A549 (cell line): ENCODE measurements at regions of chr20 and their contacts with region 1.

Region 1: DNA sequence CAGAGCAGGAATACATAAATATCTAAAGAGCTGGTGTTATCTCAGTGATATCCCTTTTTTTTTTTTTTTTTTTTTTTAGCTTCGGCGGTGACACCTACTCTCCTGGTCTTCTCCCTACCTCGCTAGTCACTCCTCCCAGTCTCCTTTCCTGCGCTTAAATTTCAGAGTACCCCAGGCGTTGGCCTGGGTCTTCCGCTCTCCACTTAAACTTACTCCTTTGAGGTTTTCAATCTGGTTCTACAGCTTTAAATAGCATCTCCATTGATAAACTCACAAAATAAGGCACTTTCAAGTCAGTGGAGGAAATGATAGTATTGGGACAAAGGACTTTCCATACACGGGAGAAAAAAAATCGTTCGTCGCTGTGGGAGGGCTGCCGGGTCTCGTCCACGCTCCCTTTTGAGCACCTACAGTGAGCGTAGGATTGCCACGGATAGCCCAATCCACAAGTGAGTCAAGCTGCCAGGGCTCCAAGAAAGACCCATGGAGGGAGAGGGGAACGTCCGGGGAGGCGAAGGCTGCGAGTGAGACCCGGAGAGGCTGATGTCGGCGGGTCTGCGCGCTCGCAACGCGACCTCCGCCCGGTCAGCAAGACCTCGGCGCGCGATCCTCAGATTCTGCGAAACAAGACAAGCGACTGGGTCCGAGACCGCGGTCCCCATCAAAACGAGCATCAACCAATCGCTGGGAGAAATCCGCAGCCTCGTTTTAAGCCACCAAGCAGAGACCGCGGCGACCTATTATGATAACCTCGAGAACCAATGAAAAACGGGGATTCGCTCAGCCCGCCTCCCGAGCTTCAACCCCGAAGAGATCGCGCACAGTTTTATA is 672 bp upstream of the SRSF6 start:
- DNase-seq: peak; percentile 94 to 96
- ATAC-seq: peak; percentile 93 to 94
- H3K4me3 ChIP-seq: peak overlapping the region; percentile 88
- H3K27ac ChIP-seq: peak overlapping the region; percentile 99
- H3K4me1 ChIP-seq: peaks cover 18% of the 10 kb centered on the region; the same call in 2 of the 3 replicates
- CTCF ChIP-seq: no peak
- EP300 ChIP-seq: no peak
- POLR2A ChIP-seq: peak; percentile 19
- RAD21 ChIP-seq: no peak

Region 2: DNA sequence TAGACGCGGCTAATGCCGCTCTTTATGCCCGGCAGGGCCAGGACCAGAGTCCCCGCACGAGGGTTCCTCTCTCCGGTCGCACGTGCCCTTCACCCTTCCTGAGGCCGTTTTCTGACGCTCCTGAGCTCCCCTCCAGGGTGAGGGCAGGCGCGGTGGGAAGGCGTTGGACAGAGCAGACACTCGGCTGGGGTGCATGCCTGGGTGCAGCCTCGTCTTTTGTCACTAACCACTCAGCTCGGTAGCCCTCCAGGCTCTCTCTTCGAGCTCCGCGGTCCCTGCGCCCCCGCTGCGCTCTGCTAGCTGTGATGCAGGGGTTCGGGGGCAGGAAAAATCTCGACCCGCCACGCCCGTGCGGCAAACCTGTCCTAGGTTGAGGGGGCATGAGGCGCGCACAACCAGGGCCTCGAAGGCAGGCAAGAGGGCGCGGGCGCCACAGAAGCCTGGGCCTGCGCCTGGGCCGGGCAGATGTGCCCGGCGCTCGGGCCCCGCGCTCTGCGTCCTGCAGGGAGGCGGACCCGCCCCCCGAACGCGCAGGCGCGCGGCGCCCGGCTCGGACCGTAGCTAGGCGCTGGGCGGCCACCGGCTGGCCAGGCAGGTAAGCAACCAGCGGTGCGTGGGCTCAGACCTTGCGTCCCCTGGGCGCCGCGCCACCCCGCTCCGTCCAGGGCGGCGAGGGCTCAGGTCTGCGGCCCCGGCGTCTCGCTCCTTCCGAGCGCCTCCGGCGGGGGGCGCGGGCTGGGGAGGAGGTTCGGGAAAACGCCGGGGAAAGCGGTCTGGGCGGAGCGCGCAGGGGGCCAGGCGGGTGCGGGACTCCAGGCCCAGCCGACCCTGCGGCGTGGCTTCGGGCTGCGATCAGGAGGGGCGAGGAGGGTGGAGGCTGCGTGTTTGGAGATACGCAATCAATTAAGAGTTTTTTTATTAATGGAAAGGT is 50.4 kb after region 1 on chr20 and contains the start of gene L3MBTL1:
- CTCF ChIA-PET with region 1: no interaction called
- POLR2A ChIA-PET with region 1: interaction called, 11 read pairs
- DNase-seq: peak; percentile 72 to 82
- ATAC-seq: peak; percentile 97 to 98
- H3K4me3 ChIP-seq: peak within 1 kb of the TSS; percentile 58
- H3K27ac ChIP-seq: peak within 1 kb of the TSS; percentile 73 to 92
- H3K4me1 ChIP-seq: peaks cover 6% of the 10 kb centered on the region; the same call in 1 of the 3 replicates
- CTCF ChIP-seq: no peak
- EP300 ChIP-seq: no peak
- POLR2A ChIP-seq: peak; percentile 85
- RAD21 ChIP-seq: no peak
- polyA plus RNA-seq, gene L3MBTL1: 2.5 and 3.6 TPM in 2 replicates